ENCODE measurements at regions of chr2 and their contacts with region 1.

Region 1: GRCh38 chr2:215920244-215921100 is 92.9 kb downstream of the MREG start:
- DNase-seq: peak; percentile 38
- H3K4me3 Mint-ChIP-seq: no peak overlapping the region
- H3K27ac Mint-ChIP-seq: no peak overlapping the region
- H3K4me1 Mint-ChIP-seq: peaks cover 21% of the 10 kb centered on the region
- H3K27me3 Mint-ChIP-seq: no peaks in the 10 kb centered on the region

Region 2: DNA sequence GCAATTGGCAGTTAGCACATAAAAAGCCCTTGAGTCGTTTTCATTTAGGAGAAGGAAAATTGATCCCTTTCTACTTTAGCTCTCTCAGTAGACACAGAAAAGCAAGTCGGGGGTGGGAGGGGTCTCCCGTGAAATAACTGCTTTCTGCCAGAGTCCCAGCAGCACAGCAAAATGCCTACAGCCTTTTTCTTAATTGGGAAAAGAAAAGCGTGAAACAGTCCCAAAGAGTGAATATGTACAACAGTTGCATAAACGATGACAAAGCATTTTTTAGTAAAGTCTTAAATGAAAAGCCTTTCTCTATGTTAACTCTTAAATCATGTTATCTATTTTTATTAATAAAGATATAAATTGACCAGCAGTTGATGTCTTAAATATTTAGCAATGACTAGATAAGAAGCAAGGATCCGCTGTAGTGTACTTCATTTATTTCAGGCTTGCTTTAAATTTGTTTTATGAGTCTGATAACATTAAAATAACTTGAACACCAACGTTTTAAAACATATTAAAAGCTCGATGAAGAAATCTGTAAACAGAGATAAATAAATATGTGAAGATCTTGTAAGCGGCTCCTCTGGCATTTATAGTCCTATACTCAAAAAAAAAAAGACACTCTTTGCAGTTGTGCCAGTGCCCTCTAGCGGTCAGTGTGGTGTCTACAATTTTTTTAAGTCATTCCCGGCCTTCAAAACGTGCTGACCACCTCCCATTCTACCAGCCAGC is 650.9 kb before region 1 on chr2:
- intact Hi-C with region 1: loop called (anchors 5 kb)
- DNase-seq: peak; percentile 16
- H3K4me3 Mint-ChIP-seq: no peak overlapping the region
- H3K27ac Mint-ChIP-seq: no peak overlapping the region
- H3K4me1 Mint-ChIP-seq: peaks cover 11% of the 10 kb centered on the region
- H3K27me3 Mint-ChIP-seq: no peaks in the 10 kb centered on the region

Region 3: GRCh38 chr2:215454519-215455246 is 465.8 kb before region 1 on chr2:
- intact Hi-C with region 1: loop called (anchors 1 kb)
- DNase-seq: no peak
- H3K4me3 Mint-ChIP-seq: no peak overlapping the region
- H3K27ac Mint-ChIP-seq: no peak overlapping the region
- H3K4me1 Mint-ChIP-seq: no peaks in the 10 kb centered on the region
- H3K27me3 Mint-ChIP-seq: peaks cover 13% of the 10 kb centered on the region